CD4-positive, alpha-beta memory T cell (primary cell): ENCODE measurements at regions of chr16 and their contacts with region 1.

Region 1: DNA sequence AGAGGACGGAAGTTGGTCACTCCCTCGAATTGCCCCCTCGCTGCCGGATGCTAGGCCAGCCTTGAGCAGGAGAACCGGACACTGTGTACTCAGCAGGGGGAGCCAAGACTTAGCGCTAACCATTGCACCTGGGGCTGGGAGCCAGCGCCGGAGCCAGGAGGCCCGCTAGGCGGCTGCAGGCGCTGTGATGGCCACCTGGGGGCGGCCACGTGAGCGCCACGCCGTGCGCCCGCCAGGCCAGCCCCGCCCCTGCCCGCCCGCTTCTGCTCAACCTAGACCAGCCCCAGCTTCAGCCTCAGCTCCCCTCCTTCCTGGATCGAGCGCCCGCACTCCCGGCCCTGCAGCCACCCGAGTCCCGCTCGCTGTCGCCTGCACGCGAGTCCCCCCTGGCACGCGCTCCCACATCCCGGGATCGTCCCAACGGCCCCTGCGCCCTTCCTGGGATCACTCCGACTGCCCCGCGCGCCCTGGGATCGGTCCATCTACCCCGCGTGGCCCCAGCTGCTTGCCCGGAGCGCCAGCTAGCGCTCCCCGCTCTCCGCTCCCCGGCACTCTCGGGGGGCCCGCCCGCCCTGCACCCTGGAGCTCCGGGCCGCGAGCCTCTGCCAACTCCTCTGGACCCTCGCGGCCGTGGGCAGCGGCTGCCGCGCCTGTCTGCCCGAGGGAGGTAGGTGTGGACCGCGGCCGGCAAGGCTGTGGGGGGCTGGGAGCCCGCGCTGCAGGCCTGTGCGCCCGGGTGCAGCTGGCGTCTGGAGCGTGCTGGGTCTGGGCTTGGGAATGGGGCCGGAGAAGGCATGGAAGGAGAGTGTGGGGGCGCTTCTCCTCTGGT is at the start of gene EEF2K:
- DNase-seq: peak; percentile 64 to 80 (median 74)
- H3K4me3 ChIP-seq: peak within 1 kb of the TSS; percentile 76 to 78
- H3K4me3 Mint-ChIP-seq: peak within 1 kb of the TSS; percentile 91 to 97 (median 93)
- H3K27ac ChIP-seq: peak within 1 kb of the TSS; percentile 68
- H3K27ac Mint-ChIP-seq: peak within 1 kb of the TSS; percentile 81 to 95 (median 89)
- H3K4me1 ChIP-seq: peaks cover 14% of the 10 kb centered on the region
- H3K4me1 Mint-ChIP-seq: peaks cover 16 to 33% (median 25%) of the 10 kb centered on the region in 4 donors
- H3K27me3 ChIP-seq: no peaks in the 10 kb centered on the region
- H3K27me3 Mint-ChIP-seq: no peaks in the 10 kb centered on the region
- total RNA-seq, gene EEF2K: 19.1 to 20.7 TPM

Region 2: GRCh38 chr16:22007509-22008214 is 198.6 kb before region 1 on chr16 and contains the start of gene MOSMO:
- CTCF ChIA-PET with region 1: interaction called, 4 read pairs
- POLR2A ChIA-PET with region 1: interaction called, 4 read pairs
- intact Hi-C with region 1: loop called (anchors 1 kb)
- DNase-seq: peak; percentile 65 to 73 (median 66)
- H3K4me3 ChIP-seq: peak within 1 kb of the TSS; percentile 12 to 74
- H3K4me3 Mint-ChIP-seq: peak within 1 kb of the TSS; percentile 86 to 93 (median 90)
- H3K27ac ChIP-seq: peak within 1 kb of the TSS; percentile 78
- H3K27ac Mint-ChIP-seq: peak within 1 kb of the TSS; percentile 61 to 97 (median 87)
- H3K4me1 ChIP-seq: peaks cover 41% of the 10 kb centered on the region
- H3K4me1 Mint-ChIP-seq: peaks cover 32 to 54% (median 40%) of the 10 kb centered on the region in 4 donors
- H3K27me3 ChIP-seq: no peaks in the 10 kb centered on the region
- H3K27me3 Mint-ChIP-seq: no peaks in the 10 kb centered on the region
- total RNA-seq, gene MOSMO: 21.9 to 23.4 TPM

Region 3: DNA sequence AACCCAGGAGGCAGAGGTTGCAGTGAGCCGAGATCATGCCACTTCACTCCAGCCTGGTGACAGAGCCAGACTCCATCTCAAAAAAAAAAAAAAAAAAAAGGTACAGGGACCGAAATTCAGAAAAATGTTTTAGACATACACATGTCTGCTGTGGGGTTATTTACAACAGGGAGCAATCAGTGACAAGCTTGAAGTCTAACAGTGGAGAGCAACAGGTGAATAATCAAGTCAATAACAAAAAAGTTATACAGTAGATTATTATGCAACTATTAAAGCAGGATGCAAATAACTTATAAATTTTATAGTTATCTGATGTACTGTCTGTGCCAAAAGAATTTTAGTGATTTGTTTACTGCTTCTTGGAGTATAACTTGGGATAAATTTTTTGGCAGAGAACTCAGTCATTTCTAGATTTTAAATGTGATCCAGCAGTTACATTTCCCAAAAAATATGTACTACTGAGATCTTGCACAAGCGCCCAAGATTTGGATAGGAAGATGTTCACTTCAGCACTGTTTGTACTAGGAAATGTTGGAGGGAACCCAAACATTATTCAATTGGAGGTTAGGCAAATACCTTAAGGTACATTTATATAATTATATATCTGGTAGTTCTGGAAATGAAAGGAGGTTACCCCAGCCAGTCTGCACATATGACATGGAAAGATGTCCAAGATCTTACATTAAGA is 33.9 kb after region 1 on chr16:
- CTCF ChIA-PET with region 1: interaction called, 4 read pairs
- POLR2A ChIA-PET with region 1: interaction called, 6 read pairs
- intact Hi-C with region 1: loop called (anchors 1 kb)
- DNase-seq: no peak
- H3K4me3 ChIP-seq: no peak overlapping the region
- H3K4me3 Mint-ChIP-seq: peak overlapping the region in 2 of 8 donors; percentile 21 to 24
- H3K27ac ChIP-seq: no peak overlapping the region
- H3K27ac Mint-ChIP-seq: peak overlapping the region in 5 of 7 donors; percentile 53 to 96 (median 70)
- H3K4me1 ChIP-seq: peaks cover 36% of the 10 kb centered on the region
- H3K4me1 Mint-ChIP-seq: peaks cover 17 to 38% (median 29%) of the 10 kb centered on the region in 4 donors
- H3K27me3 ChIP-seq: no peaks in the 10 kb centered on the region
- H3K27me3 Mint-ChIP-seq: no peaks in the 10 kb centered on the region

Region 4: GRCh38 chr16:22262460-22262859 is 56.2 kb after region 1 on chr16:
- CTCF ChIA-PET with region 1: interaction called, 3 read pairs
- POLR2A ChIA-PET with region 1: interaction called, 10 read pairs
- intact Hi-C with region 1: no loop called
- DNase-seq: no peak
- H3K4me3 ChIP-seq: no peak overlapping the region
- H3K4me3 Mint-ChIP-seq: no peak overlapping the region
- H3K27ac ChIP-seq: no peak overlapping the region
- H3K27ac Mint-ChIP-seq: peak overlapping the region in 4 of 7 donors; percentile 23 to 79 (median 44)
- H3K4me1 ChIP-seq: peaks cover 25% of the 10 kb centered on the region
- H3K4me1 Mint-ChIP-seq: peaks cover 11 to 37% (median 18%) of the 10 kb centered on the region in 4 donors
- H3K27me3 ChIP-seq: no peaks in the 10 kb centered on the region
- H3K27me3 Mint-ChIP-seq: no peaks in the 10 kb centered on the region

Region 5: DNA sequence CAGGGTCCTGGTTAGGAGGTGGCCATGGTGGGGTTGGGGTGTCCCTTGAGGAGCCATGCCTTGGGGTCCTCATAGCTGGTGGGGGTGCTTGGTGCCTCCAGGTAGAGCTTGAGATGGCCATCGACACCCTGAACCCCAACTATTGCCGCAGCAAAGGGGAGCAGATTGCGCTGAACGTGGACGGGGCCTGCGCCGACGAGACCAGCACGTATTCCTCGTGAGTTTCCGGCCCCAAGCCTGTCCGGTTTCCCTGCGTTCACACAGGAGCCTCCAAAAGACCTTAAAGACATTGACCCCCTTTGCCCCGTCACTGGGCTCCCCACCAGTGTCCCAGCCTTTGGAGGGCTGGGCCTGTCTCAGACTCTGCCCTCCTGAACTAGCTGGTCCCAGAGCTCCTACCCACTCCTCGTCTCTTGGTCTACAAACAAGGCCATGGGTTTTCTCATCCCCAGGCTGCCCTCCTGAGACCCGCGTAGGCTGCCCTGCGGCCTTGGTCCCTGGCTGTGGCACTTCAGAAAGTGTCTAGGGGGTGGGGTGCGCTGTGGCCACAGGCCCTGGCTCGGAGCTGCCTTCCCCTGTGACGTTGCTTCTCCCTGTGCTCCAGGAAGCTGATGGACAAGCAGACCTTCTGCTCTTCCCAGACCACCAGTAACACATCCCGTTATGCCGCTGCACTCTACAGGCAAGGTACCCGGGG is 102.7 kb after region 1 on chr16:
- CTCF ChIA-PET with region 1: no interaction called
- POLR2A ChIA-PET with region 1: no interaction called
- intact Hi-C with region 1: no loop called
- DNase-seq: no peak
- H3K4me3 ChIP-seq: no peak overlapping the region
- H3K4me3 Mint-ChIP-seq: no peak overlapping the region
- H3K27ac ChIP-seq: no peak overlapping the region
- H3K27ac Mint-ChIP-seq: peak overlapping the region in 2 of 7 donors; percentile 54 to 60
- H3K4me1 ChIP-seq: no peaks in the 10 kb centered on the region
- H3K4me1 Mint-ChIP-seq: peaks cover 0 to 8% (median 4%) of the 10 kb centered on the region in 4 donors
- H3K27me3 ChIP-seq: no peaks in the 10 kb centered on the region
- H3K27me3 Mint-ChIP-seq: no peaks in the 10 kb centered on the region